ENCODE measurements at regions of chr14 and their contacts with region 1.

Region 1: GRCh38 chr14:62162998-62163589 is 400.9 kb downstream of the SNAPC1 start:
- H3K4me3 Mint-ChIP-seq: no peak overlapping the region
- H3K27ac Mint-ChIP-seq: no peak overlapping the region
- H3K4me1 Mint-ChIP-seq: no peaks in the 10 kb centered on the region
- H3K27me3 Mint-ChIP-seq: peaks cover 3% of the 10 kb centered on the region

Region 2: DNA sequence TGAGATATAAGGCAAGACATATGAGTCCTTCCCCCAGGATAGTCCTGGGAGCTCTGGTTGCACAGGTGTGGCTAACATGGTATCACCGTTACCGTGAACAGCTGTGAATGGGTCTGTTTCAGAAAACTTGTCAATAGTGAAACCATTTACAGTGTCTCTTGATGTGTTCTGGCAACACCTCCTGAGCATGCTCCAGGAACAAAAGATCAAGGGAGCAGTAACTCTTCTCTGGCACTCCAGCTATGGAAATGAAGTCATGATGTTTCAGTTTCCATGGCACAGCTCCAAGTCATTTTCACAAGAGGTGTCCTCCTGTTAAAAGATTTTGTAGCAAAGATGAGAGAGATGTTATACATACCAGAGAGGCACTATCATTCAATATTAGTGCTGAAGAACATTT is 147.1 kb before region 1 on chr14:
- intact Hi-C with region 1: no loop called
- H3K4me3 Mint-ChIP-seq: no peak overlapping the region
- H3K27ac Mint-ChIP-seq: no peak overlapping the region
- H3K4me1 Mint-ChIP-seq: no peaks in the 10 kb centered on the region
- H3K27me3 Mint-ChIP-seq: no peaks in the 10 kb centered on the region

Region 3: GRCh38 chr14:63276492-63277342 is 1113.6 kb after region 1 on chr14:
- intact Hi-C with region 1: loop called (anchors 5 kb)
- H3K4me3 Mint-ChIP-seq: no peak overlapping the region
- H3K27ac Mint-ChIP-seq: no peak overlapping the region
- H3K4me1 Mint-ChIP-seq: no peaks in the 10 kb centered on the region
- H3K27me3 Mint-ChIP-seq: no peaks in the 10 kb centered on the region